ENCODE measurements at regions of chr5 and their contacts with region 1.

Region 1: DNA sequence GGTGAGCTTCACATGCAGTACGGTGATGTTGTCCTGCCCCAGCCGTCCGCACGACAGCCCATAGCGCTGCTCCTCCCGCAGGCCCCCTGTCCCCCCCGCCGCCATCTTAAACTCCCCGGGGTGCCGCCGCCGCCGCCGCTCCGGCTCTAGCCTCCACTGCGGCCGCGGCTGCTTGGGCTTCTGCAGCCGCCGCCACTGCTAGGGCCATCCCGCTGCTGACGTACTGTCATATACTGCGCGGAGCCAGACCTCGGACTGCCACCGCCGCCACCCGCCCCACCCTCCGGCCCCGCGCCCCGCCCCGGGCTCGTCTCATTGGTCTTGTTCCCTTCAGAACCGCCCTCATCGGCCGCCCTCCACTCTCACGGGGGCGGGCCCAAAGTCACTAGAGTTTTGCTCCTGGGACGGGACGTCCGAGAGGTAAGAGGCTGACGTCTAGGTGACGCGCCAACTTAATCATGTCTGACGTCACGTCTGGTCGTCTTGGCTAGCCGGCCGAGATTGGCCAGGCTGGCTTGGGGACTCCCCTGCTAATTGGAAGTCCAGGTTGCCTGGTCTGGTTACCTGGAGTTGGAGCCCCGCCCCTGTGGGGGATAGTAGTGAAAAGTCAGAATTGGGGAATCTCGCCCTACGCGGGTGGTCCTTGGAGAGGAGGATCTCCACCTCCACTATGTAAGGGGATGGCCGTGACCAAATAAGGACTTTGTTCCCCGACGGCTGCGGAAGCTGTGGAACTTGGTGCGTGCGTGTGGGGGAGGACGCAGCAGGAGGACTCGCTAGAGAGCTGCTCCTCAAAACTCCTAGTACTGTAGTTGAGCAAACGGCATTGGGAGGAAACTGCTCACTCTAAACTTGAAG is at the start of gene ELL2:
- DNase-seq: peak; percentile 96
- H3K4me3 Mint-ChIP-seq: peak within 1 kb of the TSS; percentile 100
- H3K27ac Mint-ChIP-seq: peak within 1 kb of the TSS; percentile 99
- H3K4me1 Mint-ChIP-seq: peaks cover 55% of the 10 kb centered on the region
- H3K27me3 Mint-ChIP-seq: no peaks in the 10 kb centered on the region
- total RNA-seq, gene ELL2: 93.9 and 97.6 TPM in 2 replicates

Region 2: DNA sequence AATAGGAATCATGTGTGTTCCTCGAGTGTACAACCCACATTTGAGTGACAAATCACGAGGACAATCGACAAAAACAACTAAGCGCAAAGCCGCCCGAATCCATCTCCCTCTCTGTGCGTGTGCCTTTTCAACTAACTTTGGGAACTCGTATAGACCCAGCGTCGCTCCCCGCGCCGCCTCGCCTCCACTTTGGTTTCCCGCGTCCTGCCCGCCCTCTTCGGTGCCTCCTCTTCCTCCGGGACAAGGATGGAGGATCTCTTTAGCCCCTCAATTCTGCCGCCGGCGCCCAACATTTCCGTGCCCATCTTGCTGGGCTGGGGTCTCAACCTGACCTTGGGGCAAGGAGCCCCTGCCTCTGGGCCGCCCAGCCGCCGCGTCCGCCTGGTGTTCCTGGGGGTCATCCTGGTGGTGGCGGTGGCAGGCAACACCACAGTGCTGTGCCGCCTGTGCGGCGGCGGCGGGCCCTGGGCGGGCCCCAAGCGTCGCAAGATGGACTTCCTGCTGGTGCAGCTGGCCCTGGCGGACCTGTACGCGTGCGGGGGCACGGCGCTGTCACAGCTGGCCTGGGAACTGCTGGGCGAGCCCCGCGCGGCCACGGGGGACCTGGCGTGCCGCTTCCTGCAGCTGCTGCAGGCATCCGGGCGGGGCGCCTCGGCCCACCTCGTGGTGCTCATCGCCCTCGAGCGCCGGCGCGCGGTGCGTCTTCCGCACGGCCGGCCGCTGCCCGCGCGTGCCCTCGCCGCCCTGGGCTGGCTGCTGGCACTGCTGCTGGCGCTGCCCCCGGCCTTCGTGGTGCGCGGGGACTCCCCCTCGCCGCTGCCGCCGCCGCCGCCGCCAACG is 341.6 kb before region 1 on chr5 and contains the start of gene GPR150:
- intact Hi-C with region 1: no loop called
- DNase-seq: peak; percentile 46
- H3K4me3 Mint-ChIP-seq: peak within 1 kb of the TSS; percentile 83
- H3K27ac Mint-ChIP-seq: peak within 1 kb of the TSS; percentile 72
- H3K4me1 Mint-ChIP-seq: peaks cover 38% of the 10 kb centered on the region
- H3K27me3 Mint-ChIP-seq: peaks cover 22% of the 10 kb centered on the region
- total RNA-seq, gene GPR150: 0.22 and 0.26 TPM in 2 replicates

Region 3: DNA sequence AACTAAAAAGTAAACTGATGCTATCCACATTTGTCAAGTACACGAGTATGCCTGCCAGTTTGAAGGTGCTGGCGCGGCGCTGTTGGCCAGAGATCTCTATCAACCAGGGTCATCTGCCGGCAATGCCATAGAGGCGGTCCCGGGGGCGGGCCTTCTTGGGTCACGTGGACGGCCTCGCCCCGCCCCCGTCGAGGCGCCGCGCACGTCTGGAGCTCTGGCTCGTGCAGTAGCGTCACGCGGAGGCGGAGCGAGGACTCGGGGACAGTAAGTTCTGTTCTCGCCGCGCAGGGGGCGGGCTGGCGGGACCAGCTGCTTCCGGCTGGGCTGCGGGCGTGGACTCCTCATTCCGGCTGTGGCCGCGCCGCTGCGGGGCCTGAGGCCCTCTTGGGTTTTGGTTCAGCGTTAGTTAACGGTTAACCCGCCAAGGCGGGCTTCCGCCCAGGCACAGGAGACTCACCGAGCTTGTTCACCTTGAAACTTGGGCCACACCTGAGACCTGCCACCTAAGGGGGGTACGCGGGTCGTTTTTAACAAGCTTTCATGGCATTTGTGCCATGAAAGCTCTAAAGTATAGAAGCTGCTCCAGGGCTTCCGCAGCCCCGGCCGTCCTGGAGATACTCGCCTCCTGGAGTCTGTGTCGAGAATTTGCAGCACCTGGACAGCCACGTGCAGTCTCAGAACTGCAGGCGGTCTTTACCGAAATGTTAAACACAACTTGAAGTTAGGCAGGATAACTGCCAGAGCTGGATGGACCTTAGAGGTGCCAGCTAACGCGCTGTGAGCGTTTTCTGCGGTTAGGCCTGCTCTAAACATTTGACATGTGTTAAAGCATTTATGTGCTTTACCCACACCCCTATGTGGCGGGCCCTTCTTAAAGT is 315.1 kb before region 1 on chr5 and contains the start of gene RFESD:
- intact Hi-C with region 1: loop called (anchors 2 kb)
- DNase-seq: peak; percentile 94
- H3K4me3 Mint-ChIP-seq: peak within 1 kb of the TSS; percentile 76
- H3K27ac Mint-ChIP-seq: peak within 1 kb of the TSS; percentile 75
- H3K4me1 Mint-ChIP-seq: peaks cover 27% of the 10 kb centered on the region
- H3K27me3 Mint-ChIP-seq: peaks cover 3% of the 10 kb centered on the region
- total RNA-seq, gene RFESD: 3.0 and 6.0 TPM in 2 replicates

Region 4: GRCh38 chr5:95734906-95735305 is 226.9 kb before region 1 on chr5:
- intact Hi-C with region 1: no loop called
- DNase-seq: no peak
- H3K4me3 Mint-ChIP-seq: no peak overlapping the region
- H3K27ac Mint-ChIP-seq: no peak overlapping the region
- H3K4me1 Mint-ChIP-seq: peaks cover 17% of the 10 kb centered on the region
- H3K27me3 Mint-ChIP-seq: peaks cover 59% of the 10 kb centered on the region

Region 5: GRCh38 chr5:95927927-95928723 is 33.7 kb before region 1 on chr5:
- intact Hi-C with region 1: loop called (anchors 1 kb)
- DNase-seq: no peak
- H3K4me3 Mint-ChIP-seq: peak overlapping the region; percentile 67
- H3K27ac Mint-ChIP-seq: peak overlapping the region; percentile 89
- H3K4me1 Mint-ChIP-seq: peaks cover 79% of the 10 kb centered on the region
- H3K27me3 Mint-ChIP-seq: no peaks in the 10 kb centered on the region

Region 6: GRCh38 chr5:96113170-96113939 is 151.5 kb after region 1 on chr5:
- intact Hi-C with region 1: loop called (anchors 1 kb)
- DNase-seq: no peak
- H3K4me3 Mint-ChIP-seq: no peak overlapping the region
- H3K27ac Mint-ChIP-seq: peak overlapping the region; percentile 50
- H3K4me1 Mint-ChIP-seq: peaks cover 42% of the 10 kb centered on the region
- H3K27me3 Mint-ChIP-seq: no peaks in the 10 kb centered on the region

Region 7: DNA sequence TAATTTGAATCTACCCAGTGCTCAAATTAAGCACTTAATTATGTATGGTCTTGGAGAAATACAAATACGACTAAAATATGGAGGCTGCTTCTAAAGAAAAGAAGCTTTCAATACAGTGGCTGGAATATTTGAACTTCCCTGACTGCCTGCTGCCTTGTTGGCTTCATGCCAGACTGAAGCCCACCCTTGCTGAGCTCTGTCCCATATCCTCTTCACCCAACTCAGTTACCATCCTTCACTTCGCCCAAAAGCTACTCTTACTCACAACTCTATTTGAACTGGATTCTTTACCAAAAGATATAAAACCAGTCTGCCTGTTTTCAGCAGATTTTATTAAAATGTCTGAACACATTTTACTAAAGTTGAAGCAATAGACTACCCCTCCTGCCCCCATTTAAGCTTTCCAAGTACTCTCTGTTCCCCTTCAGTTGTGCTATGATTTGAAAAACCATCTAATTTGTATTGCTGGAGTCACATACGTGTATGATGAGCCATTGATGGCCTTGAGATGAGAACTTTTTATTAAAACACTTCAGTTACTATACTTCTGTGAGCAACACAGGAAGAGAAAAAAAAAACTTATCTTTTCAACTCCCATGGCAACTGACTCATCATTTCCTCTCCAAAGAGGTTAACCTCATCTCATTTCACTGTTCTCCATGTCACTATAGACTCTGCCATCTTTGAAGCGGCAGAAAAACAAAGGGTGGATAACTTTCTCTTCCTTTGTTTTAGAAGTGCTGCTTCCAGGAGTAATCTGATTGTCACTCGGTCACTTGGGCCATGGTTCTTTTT is 575.3 kb after region 1 on chr5:
- intact Hi-C with region 1: loop called (anchors 5 kb)
- DNase-seq: peak; percentile 32
- H3K4me3 Mint-ChIP-seq: no peak overlapping the region
- H3K27ac Mint-ChIP-seq: peak overlapping the region; percentile 78
- H3K4me1 Mint-ChIP-seq: peaks cover 26% of the 10 kb centered on the region
- H3K27me3 Mint-ChIP-seq: peaks cover 3% of the 10 kb centered on the region

Region 8: DNA sequence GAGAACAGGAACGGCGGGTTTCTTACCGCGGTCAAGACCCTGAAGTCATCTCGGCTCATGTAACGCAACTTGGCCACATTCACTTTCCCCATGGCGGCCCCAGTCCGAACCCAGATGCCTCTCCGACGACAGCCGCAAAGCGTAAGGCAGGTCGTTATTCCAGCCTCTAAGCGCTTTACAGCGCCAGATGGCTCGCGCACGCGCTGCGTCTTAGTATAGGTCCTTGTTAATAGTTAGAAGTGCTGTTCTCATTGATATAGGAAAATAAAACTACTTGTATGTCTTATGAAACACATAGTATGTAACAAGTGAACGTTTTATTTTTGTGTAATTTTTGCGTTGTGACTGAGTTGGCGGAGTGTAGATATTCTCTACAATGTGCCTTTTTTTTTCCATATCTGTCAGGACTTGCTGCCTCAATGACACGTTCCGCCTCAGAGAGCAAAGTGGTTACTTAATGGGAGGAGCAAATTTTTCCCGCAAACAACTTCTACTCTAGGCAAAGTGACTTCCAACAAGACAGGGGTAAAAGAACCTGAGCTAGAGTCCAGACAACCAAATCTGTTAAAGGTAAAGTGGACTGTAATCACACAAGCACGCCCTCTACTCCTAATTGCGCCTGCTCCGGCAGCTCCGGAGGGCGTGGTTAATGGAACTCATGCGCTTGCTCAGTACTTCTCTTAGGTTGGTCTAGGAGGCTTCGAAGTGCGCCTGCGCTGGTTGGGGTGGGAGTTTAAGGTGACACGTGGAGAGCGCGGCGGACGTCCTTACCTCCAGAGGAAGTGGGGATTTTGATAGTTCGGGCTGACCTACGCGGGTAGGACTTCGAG is 1221.5 kb after region 1 on chr5 and contains the start of gene RIOK2:
- intact Hi-C with region 1: loop called (anchors 5 kb)
- DNase-seq: peak; percentile 86
- H3K4me3 Mint-ChIP-seq: peak within 1 kb of the TSS; percentile 91
- H3K27ac Mint-ChIP-seq: peak within 1 kb of the TSS; percentile 100
- H3K4me1 Mint-ChIP-seq: peaks cover 42% of the 10 kb centered on the region
- H3K27me3 Mint-ChIP-seq: peaks cover 9% of the 10 kb centered on the region
- total RNA-seq, gene RIOK2: 37.2 and 47.2 TPM in 2 replicates